AG04449 (cell line): ENCODE measurements at regions of chr16 and their contacts with region 1.

Region 1: DNA sequence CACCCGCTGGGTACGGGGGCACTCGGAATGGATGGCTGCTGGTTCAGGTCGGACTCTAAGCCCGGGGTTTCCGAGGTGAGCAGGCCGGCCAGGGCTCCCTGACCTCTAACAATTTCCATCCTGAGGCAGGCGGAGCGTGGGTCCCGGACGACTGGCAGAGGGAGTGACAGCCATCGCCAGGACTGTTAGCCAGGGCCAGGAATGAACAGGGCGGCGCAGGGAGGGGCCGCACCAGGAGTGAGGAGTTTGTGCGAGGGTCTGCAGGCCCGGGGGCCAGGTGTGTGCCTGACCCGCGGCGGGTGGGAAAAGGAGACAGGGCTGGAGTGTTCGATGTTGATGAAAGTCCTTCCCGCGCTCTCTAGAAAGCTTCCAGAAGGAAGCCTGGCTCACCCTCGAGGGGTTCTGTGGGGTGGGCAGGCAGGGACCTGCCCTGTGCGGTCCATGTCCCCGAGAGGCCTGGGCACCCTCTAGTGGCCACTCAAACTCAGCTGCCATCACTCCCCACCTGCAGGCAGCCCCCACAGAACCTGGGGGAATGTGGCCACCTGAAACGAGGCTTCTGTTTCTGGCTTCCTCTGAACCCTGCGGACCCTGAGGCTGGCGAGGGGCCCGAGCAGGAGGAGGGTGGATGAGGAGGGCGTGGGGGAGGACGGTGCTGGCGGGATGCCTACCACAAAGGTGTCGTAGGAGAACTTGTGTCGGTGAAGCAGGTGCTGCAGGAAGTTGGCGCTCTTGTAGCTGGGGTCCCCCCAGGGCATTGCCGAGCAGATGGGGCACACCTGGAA is 8.2 kb downstream of the RNF166 start:
- DNase-seq: no peak
- H3K4me3 ChIP-seq: no peak overlapping the region
- CTCF ChIP-seq: peak; percentile 29

Region 2: GRCh38 chr16:88686439-88687253 is 11.4 kb before region 1 on chr16 and contains the start of gene SNAI3:
- CTCF ChIA-PET with region 1: interaction called, 11 read pairs
- POLR2A ChIA-PET with region 1: no interaction called
- DNase-seq: no peak
- H3K4me3 ChIP-seq: peak within 1 kb of the TSS; percentile 48
- CTCF ChIP-seq: no peak

Region 3: GRCh38 chr16:88713568-88714419 is 15.8 kb after region 1 on chr16:
- CTCF ChIA-PET with region 1: no interaction called
- POLR2A ChIA-PET with region 1: no interaction called
- DNase-seq: no peak
- H3K4me3 ChIP-seq: no peak overlapping the region
- CTCF ChIP-seq: no peak